ENCODE measurements at regions of chr19 and their contacts with region 1.

Region 1: DNA sequence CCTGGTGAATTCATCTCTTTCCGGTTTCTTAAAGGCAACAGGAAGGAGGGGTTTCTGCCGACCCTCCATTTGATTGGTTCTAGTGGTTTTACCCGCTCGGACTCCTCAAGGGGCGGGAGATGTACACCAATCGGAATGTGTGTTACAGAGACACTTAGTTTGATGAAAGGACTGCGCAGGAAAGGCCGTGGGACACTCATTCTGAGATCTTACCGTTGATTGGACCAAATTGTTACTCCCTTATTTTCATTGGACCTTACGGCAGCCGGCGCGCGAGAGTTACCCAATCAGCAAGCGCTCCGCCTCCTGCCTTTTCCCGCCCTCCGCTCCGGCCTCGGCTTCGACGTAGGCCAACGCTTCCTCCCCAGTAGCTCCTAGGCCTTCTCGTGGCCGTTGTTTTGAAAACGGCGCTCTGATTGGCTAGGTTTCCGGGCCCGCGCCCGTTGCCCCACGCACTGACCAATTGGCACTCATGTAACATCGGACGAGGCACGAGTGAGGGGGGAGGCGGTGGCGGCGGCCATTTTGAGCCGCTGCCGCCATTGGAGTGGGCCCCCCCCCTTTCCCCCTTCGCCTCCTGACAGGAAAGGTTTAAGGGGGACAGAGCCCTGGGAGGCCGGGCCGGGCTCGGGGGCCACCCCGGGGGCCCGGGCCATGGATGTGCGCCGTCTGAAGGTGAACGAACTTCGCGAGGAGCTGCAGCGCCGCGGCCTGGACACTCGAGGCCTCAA is at the start of gene HNRNPUL1:
- DNase-seq: peak; percentile 100
- H3K4me3 ChIP-seq: peak within 1 kb of the TSS; percentile 96
- H3K27ac ChIP-seq: peak within 1 kb of the TSS; percentile 91
- H3K4me1 ChIP-seq: peaks cover 15% of the 10 kb centered on the region
- CTCF ChIP-seq: peak; percentile 64
- total RNA-seq, gene HNRNPUL1: 194 and 200 TPM in 2 replicates

Region 2: GRCh38 chr19:40974633-40975037 is 289.4 kb before region 1 on chr19:
- CTCF ChIA-PET with region 1: no interaction called
- POLR2A ChIA-PET with region 1: no interaction called
- intact Hi-C with region 1: loop called (anchors 5 kb)
- DNase-seq: peak; percentile 75
- H3K4me3 ChIP-seq: no peak overlapping the region
- H3K27ac ChIP-seq: no peak overlapping the region
- H3K4me1 ChIP-seq: no peaks in the 10 kb centered on the region
- CTCF ChIP-seq: peak; percentile 86

Region 3: DNA sequence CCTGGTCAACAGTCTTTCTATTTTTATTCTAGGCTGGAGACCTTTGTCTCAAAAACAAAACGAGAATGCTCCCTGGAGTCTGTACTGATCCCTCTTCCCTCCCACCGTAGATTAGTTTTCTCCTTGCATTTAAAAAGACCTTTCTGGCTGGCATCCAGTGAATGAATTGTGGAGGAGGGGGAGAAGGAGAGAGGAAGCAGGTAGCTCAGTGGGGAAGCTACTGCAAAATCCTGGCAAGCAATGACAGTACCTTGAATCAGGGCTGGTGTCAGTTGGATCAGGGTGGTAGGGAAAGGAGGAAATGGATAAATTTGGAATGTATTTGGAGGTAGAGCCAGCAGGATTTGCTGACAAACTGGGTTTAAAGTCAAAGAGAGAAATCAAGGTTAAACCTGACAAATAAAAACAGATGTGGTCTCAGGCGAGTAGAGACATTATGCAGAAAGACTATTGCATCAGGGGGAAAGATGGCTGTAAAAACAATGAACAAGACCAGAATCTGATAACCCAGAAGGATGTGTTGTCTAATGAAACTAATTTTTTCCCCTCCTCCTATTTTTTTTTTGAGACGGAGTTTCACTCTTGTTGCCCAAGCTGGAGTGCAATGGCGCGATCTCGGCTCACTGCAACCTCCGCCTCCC is 74.5 kb before region 1 on chr19:
- CTCF ChIA-PET with region 1: no interaction called
- POLR2A ChIA-PET with region 1: no interaction called
- intact Hi-C with region 1: no loop called
- DNase-seq: no peak
- H3K4me3 ChIP-seq: no peak overlapping the region
- H3K27ac ChIP-seq: no peak overlapping the region
- H3K4me1 ChIP-seq: no peaks in the 10 kb centered on the region
- CTCF ChIP-seq: no peak

Region 4: GRCh38 chr19:41327576-41328156 is 63.7 kb after region 1 on chr19:
- CTCF ChIA-PET with region 1: no interaction called
- POLR2A ChIA-PET with region 1: no interaction called
- intact Hi-C with region 1: loop called (anchors 2 kb)
- DNase-seq: peak; percentile 80
- H3K4me3 ChIP-seq: peak overlapping the region; percentile 61
- H3K27ac ChIP-seq: peak overlapping the region; percentile 79
- H3K4me1 ChIP-seq: peaks cover 53% of the 10 kb centered on the region
- CTCF ChIP-seq: no peak

Region 5: GRCh38 chr19:41439441-41440222 is 175.6 kb after region 1 on chr19 and contains the start of gene DMAC2:
- CTCF ChIA-PET with region 1: no interaction called
- POLR2A ChIA-PET with region 1: no interaction called
- intact Hi-C with region 1: loop called (anchors 5 kb)
- DNase-seq: peak; percentile 100
- H3K4me3 ChIP-seq: peak within 1 kb of the TSS; percentile 73
- H3K27ac ChIP-seq: peak within 1 kb of the TSS; percentile 61
- H3K4me1 ChIP-seq: peaks cover 26% of the 10 kb centered on the region
- CTCF ChIP-seq: peak; percentile 87
- total RNA-seq, gene DMAC2: 22.4 and 30.6 TPM in 2 replicates